Heart left ventricle (tissue), 16 donors: ENCODE measurements at regions of chr2 and their contacts with region 1.

Region 1: GRCh38 chr2:54370405-54371104 is 85.6 kb upstream of the SPTBN1 start:
- DNase-seq: peak; percentile 56 to 72 (median 71)
- ATAC-seq: peak; percentile 62 to 93 (median 78)
- H3K4me3 ChIP-seq: no peak overlapping the region
- H3K27ac ChIP-seq: peak overlapping the region; percentile 66 to 84 (median 74)
- H3K4me1 ChIP-seq: peaks cover 10 to 52% (median 34%) of the 10 kb centered on the region in 12 donors
- H3K27me3 ChIP-seq: no peaks in the 10 kb centered on the region
- CTCF ChIP-seq: no peak
- POLR2A ChIP-seq: no peak

Region 2: GRCh38 chr2:54416166-54416813 is 45.7 kb after region 1 on chr2:
- intact Hi-C with region 1: loop called in 3 of 10 experiments (anchors 2 to 5 kb)
- DNase-seq: peak in 3 of 5 donors; percentile 43 to 60 (median 60)
- ATAC-seq: peak; percentile 72 to 90 (median 82)
- H3K4me3 ChIP-seq: no peak overlapping the region
- H3K27ac ChIP-seq: peak overlapping the region; percentile 65 to 88 (median 72)
- H3K4me1 ChIP-seq: peaks cover 0 to 58% (median 45%) of the 10 kb centered on the region in 12 donors
- H3K27me3 ChIP-seq: no peaks in the 10 kb centered on the region
- CTCF ChIP-seq: no peak
- POLR2A ChIP-seq: no peak

Region 3: GRCh38 chr2:54422072-54422581 is 51.6 kb after region 1 on chr2:
- intact Hi-C with region 1: loop called in 3 of 10 experiments (anchors 2 to 5 kb)
- DNase-seq: no peak
- ATAC-seq: no peak
- H3K4me3 ChIP-seq: no peak overlapping the region
- H3K27ac ChIP-seq: peak overlapping the region in 2 of 12 donors; percentile 15 to 28
- H3K4me1 ChIP-seq: peaks cover 0 to 68% (median 46%) of the 10 kb centered on the region in 12 donors
- H3K27me3 ChIP-seq: no peaks in the 10 kb centered on the region
- CTCF ChIP-seq: no peak
- POLR2A ChIP-seq: no peak

Region 4: DNA sequence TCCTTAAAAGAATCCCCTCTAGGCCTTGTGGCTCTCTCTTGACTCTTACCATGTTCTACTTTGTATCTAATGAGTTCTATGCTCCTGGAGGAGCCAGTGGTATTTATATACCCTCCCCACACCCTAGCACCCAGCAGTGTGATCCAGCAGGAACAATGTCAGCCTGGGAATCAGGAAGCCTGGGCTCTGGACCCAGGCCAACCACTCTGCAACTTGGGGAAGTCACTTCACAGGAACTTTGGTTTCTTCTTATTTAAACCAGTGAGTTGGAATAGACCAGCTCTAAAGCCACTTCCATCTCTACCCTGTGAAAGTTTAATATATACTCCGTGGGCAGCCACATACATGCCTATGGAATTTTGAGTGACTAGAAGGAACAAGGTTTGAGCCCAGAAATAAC is 73.9 kb after region 1 on chr2:
- intact Hi-C with region 1: no loop called
- DNase-seq: peak; percentile 64 to 72 (median 68)
- ATAC-seq: peak; percentile 37 to 78 (median 50)
- H3K4me3 ChIP-seq: no peak overlapping the region
- H3K27ac ChIP-seq: peak overlapping the region in 9 of 12 donors; percentile 9 to 60 (median 33)
- H3K4me1 ChIP-seq: peaks cover 3 to 38% (median 21%) of the 10 kb centered on the region in 12 donors
- H3K27me3 ChIP-seq: no peaks in the 10 kb centered on the region
- CTCF ChIP-seq: no peak
- POLR2A ChIP-seq: no peak